MCF 10A (cell line): ENCODE measurements at regions of chr1 and their contacts with region 1.

Region 1: GRCh38 chr1:224356685-224357625 is at the start of gene CNIH4:
- DNase-seq: peak; percentile 99
- H3K4me3 Mint-ChIP-seq: peak within 1 kb of the TSS; percentile 89
- H3K27ac Mint-ChIP-seq: peak within 1 kb of the TSS; percentile 74
- H3K4me1 Mint-ChIP-seq: peaks cover 17% of the 10 kb centered on the region
- H3K27me3 Mint-ChIP-seq: no peaks in the 10 kb centered on the region
- CTCF ChIP-seq: peak; percentile 11
- total RNA-seq, gene CNIH4: 190 and 212 TPM in 2 replicates

Region 2: DNA sequence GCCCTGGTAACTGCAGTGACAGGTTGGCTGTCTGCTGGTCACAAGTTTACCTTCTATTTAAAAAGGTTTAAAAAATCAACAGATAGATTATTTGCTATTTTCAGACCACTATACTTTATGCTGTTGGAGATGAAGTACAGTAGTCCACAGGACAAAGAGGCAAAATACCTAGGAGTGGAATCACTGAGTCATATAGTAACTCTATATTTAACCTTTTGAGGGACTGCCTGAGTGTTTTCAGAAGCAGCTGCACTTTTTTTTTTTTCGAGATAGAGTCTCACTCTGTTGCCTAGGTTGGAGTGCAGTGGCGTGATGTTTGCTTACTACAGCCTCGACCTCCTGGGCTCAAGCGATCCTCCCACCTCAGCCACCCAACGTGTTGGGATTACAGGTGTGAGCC is 11.5 kb after region 1 on chr1:
- CTCF ChIA-PET with region 1: interaction called, 7 read pairs
- POLR2A ChIA-PET with region 1: interaction called, 33 read pairs
- intact Hi-C with region 1: no loop called
- DNase-seq: no peak
- H3K4me3 Mint-ChIP-seq: no peak overlapping the region
- H3K27ac Mint-ChIP-seq: no peak overlapping the region
- H3K4me1 Mint-ChIP-seq: peaks cover 7% of the 10 kb centered on the region
- H3K27me3 Mint-ChIP-seq: no peaks in the 10 kb centered on the region
- CTCF ChIP-seq: no peak

Region 3: DNA sequence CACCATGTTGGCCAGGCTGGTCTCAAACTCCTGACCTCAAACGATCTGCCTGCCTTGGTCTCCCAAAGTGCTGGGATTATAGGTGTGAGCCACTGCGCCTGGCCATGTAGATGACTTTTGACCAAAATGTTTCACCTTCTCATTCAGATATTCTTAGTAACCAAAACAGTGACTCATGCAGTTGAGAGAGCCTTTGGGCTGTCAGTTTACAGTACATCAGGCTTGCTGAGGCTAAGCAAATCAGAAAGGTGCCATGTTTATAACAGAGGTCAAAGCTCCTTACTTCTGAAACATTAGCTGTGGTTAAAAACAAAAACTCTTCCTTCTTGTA is 20.7 kb after region 1 on chr1:
- CTCF ChIA-PET with region 1: interaction called, 17 read pairs
- POLR2A ChIA-PET with region 1: interaction called, 46 read pairs
- intact Hi-C with region 1: no loop called
- DNase-seq: peak; percentile 77
- H3K4me3 Mint-ChIP-seq: no peak overlapping the region
- H3K27ac Mint-ChIP-seq: peak overlapping the region; percentile 44
- H3K4me1 Mint-ChIP-seq: peaks cover 24% of the 10 kb centered on the region
- H3K27me3 Mint-ChIP-seq: no peaks in the 10 kb centered on the region
- CTCF ChIP-seq: no peak

Region 4: GRCh38 chr1:224521904-224522734 is 165.2 kb after region 1 on chr1:
- CTCF ChIA-PET with region 1: no interaction called
- POLR2A ChIA-PET with region 1: no interaction called
- intact Hi-C with region 1: no loop called
- DNase-seq: no peak
- H3K4me3 Mint-ChIP-seq: no peak overlapping the region
- H3K27ac Mint-ChIP-seq: no peak overlapping the region
- H3K4me1 Mint-ChIP-seq: peaks cover 8% of the 10 kb centered on the region
- H3K27me3 Mint-ChIP-seq: no peaks in the 10 kb centered on the region
- CTCF ChIP-seq: peak; percentile 7